GM10248 (cell line): ENCODE measurements at regions of chr5 and their contacts with region 1.

Region 1: GRCh38 chr5:83848941-83849340 is 128.3 kb upstream of the HAPLN1 start:
- DNase-seq: no peak
- CTCF ChIP-seq: no peak

Region 2: DNA sequence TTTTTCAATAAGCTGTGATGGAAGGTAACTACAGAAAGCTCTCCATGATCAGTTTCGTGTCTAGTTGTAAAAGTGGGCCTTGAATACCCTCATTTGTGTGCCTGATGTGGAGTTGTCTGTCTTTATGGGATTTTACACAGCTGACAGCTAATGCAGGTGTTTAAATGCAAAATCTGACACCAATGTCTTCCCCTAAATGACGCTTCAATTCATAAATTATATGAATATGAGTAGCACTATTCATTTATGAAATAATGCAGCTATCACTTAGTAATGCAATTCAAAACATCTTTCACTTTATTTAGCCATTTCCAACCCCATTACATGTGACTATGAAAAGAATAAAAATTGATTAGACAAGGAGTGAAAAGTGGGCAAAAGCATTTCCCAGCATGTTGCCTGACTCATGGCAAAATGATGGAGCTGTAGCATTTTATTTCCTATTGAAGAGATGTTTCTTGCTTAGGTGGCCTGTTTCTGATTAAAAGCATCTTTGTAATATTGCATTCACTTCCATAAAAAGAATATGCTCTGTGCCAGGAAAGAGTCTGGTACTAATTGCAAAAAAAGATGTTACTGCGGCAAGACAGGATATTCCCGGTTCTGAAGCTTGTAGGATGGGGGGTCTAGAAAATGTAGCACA is 11.6 kb before region 1 on chr5:
- CTCF ChIA-PET with region 1: interaction called, 14 read pairs
- POLR2A ChIA-PET with region 1: no interaction called
- DNase-seq: no peak
- CTCF ChIP-seq: no peak

Region 3: DNA sequence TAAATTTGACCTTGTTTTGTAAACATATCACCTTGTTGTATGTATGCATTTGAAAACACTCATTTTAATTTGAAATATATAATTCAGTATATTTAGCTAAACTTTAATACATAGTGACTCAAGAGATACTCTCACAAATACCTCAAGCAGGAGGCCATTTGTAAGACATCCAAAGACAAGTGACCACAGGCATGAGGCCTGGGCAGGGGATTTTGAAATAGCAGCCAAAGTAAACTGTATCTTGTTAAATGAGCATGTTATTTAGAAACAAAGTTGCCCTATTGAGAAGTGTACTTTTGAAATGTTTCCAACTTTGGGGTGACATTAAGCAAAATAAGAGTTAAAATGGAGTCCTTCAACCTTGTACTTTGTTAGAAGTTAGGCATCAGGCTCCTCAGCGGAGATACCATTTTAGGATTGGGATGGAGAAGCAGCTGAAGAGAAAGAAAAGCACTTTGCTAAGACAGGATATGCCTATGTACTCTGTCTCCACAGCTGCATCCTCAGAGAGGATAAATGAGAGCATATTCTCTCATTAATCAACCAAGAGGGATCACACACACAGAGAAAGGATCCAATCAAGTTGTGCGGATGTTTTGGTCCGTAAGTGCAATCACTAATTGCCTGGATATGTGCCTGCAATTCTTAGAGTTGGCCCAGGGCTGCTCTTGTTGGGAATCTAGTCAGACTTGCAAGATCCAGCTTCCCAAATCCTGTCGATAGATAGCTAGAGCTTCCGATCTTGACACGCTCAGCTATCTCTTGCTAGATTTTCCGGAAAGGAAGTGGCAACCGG is 29.2 kb after region 1 on chr5:
- CTCF ChIA-PET with region 1: no interaction called
- POLR2A ChIA-PET with region 1: no interaction called
- DNase-seq: no peak
- CTCF ChIP-seq: no peak